Left colon (tissue), 2 donors: ENCODE measurements at regions of chr3 and their contacts with region 1.

Region 1: GRCh38 chr3:177050501-177051237 is 146.6 kb downstream of the TBL1XR1 start:
- DNase-seq: no peak
- ATAC-seq: peak; percentile 81

Region 2: DNA sequence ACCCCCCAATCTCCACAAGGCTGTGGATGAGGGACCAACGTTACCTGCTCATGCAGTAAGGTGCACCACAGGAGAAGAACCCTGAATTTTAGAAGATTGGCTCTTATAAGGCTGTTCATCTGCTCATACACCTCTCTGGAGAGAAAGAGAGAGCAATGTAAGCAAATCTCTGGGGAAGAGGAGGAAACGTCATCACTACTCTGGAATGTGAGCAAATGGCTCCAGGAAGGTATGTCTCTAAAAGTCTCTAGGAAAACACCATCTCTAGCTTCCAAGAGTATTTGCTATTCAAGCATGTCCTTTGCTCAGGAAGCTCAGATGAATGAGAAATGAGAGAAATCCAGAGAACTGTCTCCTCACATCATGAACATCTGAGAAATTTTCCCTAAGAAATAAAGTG is 88.8 kb before region 1 on chr3:
- intact Hi-C with region 1: no loop called
- DNase-seq: no peak
- ATAC-seq: no peak

Region 3: GRCh38 chr3:176994876-176995781 is 55.5 kb before region 1 on chr3:
- intact Hi-C with region 1: no loop called
- DNase-seq: no peak
- ATAC-seq: peak; percentile 75

Region 4: DNA sequence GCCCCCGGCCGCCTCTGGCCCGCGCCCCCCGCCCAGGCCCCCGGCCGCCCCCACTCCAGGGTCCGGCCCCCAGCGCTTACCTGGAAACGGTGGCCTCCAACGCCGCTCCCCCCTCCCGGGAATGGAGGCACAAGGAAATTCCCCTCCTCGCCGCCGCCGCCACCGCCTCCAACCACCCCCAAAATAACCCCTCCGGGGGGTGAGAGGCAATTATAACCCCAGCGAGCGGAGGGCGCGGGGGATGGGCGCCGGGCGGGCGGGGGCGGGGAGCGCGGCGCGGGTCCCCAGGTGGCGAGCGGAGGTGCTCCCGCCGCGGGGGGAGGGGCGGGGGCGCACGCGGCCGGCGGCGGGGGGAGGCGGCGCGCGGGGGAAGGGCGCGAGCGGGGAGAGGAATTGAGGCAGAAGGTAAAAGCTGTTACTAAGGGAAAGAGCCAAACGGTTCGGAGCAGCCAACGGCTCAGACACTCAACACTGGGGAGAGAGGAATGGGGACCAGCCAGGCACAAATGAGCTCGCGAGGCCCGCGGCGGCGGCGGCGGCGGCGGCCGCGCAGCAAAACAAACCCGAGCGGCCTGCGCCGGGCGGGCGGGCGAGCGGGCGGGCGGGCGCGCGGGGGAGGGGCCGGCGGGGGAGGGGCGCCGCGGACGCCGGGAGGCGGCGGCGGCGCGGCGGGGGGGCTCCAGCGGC is 146.5 kb after region 1 on chr3 and contains the start of gene TBL1XR1:
- intact Hi-C with region 1: loop called (anchors 5 to 10 kb)
- DNase-seq: peak; percentile 91 to 95
- ATAC-seq: peak; percentile 76
- total RNA-seq, gene TBL1XR1: 165 to 186 TPM

Region 5: GRCh38 chr3:178456621-178457285 is 1406.1 kb after region 1 on chr3:
- intact Hi-C with region 1: no loop called
- DNase-seq: no peak
- ATAC-seq: no peak